HEK293 (cell line): ENCODE measurements at regions of chr14 and their contacts with region 1.

Region 1: GRCh38 chr14:60349663-60350365 is 100.8 kb downstream of the PPM1A start:
- H3K4me3 ChIP-seq: no peak overlapping the region
- H3K27ac ChIP-seq: no peak overlapping the region
- H3K4me1 ChIP-seq: 0 out of 2 replicates have a peak, but pooled peaks cover 3% of the 10 kb centered on the region
- CTCF ChIP-seq: no peak

Region 2: GRCh38 chr14:60125918-60126317 is 223.9 kb before region 1 on chr14:
- CTCF ChIA-PET with region 1: no interaction called
- POLR2A ChIA-PET with region 1: no interaction called
- H3K4me3 ChIP-seq: no peak overlapping the region
- H3K27ac ChIP-seq: no peak overlapping the region
- H3K4me1 ChIP-seq: no peaks in the 10 kb centered on the region
- CTCF ChIP-seq: no peak

Region 3: GRCh38 chr14:60266021-60266937 is 83.5 kb before region 1 on chr14:
- CTCF ChIA-PET with region 1: interaction called, 13 read pairs
- POLR2A ChIA-PET with region 1: no interaction called
- H3K4me3 ChIP-seq: no peak overlapping the region
- H3K27ac ChIP-seq: no peak overlapping the region
- H3K4me1 ChIP-seq: no peaks in the 10 kb centered on the region; the same call in 1 of the 2 replicates
- CTCF ChIP-seq: no peak

Region 4: DNA sequence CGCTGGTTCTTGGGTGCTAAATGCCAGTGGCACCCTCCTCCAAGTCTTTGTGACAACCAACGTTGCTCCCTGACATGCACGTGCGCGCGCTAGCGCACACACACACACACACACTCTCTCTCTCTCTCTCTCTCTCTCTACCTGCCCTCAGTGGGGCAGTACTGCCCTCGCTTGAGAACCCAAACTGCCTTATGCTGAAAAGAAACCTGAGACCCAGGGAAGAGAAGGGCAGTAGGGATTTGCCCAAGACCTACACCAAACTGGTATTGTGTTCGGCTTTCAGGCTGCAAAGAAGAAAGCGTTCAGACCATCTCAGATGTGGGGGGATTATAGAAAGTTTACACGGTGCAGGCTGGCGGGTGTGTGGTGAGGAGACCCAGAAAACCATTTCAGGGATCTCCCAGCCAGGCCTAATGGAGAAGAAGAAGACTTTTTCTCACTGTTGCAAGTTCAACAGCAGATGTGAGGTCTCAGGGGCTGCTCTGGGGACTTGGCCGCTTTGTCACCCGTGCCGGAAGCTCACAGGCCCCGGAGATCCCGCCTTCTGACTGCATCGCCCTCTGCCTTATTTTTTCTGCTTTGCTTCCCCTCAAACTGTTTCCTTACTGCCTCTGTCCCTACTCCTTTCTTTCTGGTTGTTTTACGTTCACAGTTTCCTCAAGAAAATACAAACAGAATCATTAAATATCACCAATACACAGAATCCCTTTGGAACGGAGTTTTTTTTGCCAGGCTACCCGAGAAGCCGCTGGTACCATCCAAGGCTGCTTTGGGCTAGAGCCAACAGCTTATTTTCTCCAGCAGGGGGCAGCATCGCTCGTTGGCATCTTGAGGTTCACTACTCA is 18.4 kb before region 1 on chr14:
- CTCF ChIA-PET with region 1: interaction called, 25 read pairs
- POLR2A ChIA-PET with region 1: no interaction called
- H3K4me3 ChIP-seq: peak overlapping the region; percentile 13
- H3K27ac ChIP-seq: no peak overlapping the region; the same call in 1 of the 2 replicates
- H3K4me1 ChIP-seq: no peaks in the 10 kb centered on the region
- CTCF ChIP-seq: 0 out of 2 replicates have a peak, but pooled peaks have one; percentile 26

Region 5: GRCh38 chr14:60363687-60364086 is 13.9 kb after region 1 on chr14:
- CTCF ChIA-PET with region 1: interaction called, 14 read pairs
- POLR2A ChIA-PET with region 1: no interaction called
- H3K4me3 ChIP-seq: no peak overlapping the region
- H3K27ac ChIP-seq: no peak overlapping the region
- H3K4me1 ChIP-seq: no peaks in the 10 kb centered on the region
- CTCF ChIP-seq: no peak

Region 6: DNA sequence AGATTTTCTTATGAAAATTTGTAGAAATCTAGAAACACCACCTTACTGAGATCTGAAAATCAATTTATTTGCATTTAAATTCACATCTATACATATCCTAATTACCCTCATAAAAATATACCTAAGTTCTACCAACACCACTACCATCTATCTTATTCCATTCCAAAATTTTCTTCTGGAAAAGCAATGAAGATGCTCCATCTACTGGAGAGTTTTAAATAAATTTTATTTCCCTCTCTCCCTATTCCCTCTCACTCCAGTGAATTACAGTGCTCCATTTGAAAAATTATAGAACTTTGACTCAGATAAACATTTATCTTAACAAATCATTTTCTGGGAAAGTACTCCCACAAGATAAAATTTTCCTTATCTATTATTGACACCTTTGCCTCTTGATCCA is 138.4 kb after region 1 on chr14:
- CTCF ChIA-PET with region 1: interaction called, 18 read pairs
- POLR2A ChIA-PET with region 1: no interaction called
- H3K4me3 ChIP-seq: no peak overlapping the region
- H3K27ac ChIP-seq: no peak overlapping the region
- H3K4me1 ChIP-seq: no peaks in the 10 kb centered on the region
- CTCF ChIP-seq: no peak

Region 7: DNA sequence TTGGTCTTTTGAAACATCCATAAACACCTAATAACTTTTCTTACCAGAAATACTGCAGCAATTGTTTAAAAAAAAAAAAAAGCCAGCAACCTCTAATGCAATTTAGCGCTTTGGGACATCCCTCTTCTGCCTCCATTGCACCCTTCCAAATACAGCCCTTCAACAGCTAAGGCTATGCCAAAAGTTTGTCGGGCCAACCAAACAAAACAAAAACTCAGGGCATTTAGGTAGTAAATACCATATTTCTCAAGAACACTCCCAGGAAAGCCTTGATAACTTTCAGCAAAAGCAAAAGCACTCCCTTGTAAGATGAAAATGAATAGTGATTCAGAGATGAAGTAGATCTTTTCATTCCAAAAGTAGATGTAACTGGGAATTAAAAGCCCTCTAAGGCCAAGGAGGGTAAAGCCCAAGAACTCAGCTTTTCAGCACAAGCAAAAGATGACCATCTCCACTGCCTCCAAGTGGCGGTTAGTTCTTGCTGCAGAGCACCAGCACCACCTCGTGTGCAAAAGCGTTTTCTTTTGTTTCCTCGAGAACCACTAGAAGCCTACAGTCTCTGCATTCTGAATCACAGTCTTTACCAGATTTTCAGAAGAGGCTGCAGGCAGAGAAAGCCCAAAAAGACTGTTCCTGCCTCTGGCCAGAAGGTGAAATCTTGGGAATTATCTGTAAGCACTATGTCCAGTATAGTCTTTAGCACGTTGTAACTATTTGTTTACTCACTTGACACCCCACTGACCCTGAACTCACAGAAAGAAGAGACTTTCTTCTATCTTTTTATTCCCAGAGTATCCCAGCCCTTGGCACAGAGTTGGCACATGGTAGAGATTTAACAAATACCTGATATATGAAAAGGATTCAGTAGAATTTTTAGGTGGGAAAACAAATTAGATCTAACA is 212.3 kb after region 1 on chr14:
- CTCF ChIA-PET with region 1: interaction called, 29 read pairs
- POLR2A ChIA-PET with region 1: no interaction called
- H3K4me3 ChIP-seq: no peak overlapping the region
- H3K27ac ChIP-seq: no peak overlapping the region
- H3K4me1 ChIP-seq: peaks cover 5% of the 10 kb centered on the region; the same call in 1 of the 2 replicates
- CTCF ChIP-seq: peak; percentile 79

Region 8: DNA sequence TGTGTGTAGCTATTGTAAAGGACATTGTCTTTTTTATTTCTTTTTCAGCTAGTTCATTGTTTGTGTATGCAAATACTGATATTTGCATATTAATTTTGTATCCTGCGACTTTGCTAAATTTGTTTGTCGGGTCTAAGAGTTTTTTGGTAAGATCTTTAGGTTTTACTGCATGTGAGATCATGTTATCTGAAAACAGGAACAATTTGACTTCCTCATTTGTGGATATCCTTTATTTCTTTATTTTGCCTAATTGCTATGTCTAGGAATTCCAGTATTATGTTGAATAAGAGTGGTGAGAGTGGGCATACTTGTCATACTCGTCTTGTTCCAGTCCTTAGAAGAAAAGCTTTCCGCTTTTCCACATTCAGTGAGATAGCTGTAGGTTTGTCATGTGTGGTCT is 345.5 kb after region 1 on chr14:
- CTCF ChIA-PET with region 1: no interaction called
- POLR2A ChIA-PET with region 1: no interaction called
- H3K4me3 ChIP-seq: no peak overlapping the region
- H3K27ac ChIP-seq: no peak overlapping the region
- H3K4me1 ChIP-seq: no peaks in the 10 kb centered on the region
- CTCF ChIP-seq: no peak